ENCODE measurements at regions of chr2 and their contacts with region 1.

Region 1: GRCh38 chr2:144357623-144358373 is 162.1 kb downstream of the ZEB2 start:
- DNase-seq: peak; percentile 66
- H3K4me3 Mint-ChIP-seq: peak overlapping the region; percentile 9
- H3K27ac Mint-ChIP-seq: peak overlapping the region; percentile 68
- H3K4me1 Mint-ChIP-seq: peaks cover 16% of the 10 kb centered on the region
- H3K27me3 Mint-ChIP-seq: no peaks in the 10 kb centered on the region

Region 2: GRCh38 chr2:144341538-144341937 is 16.3 kb before region 1 on chr2:
- intact Hi-C with region 1: loop called (anchors 2 kb)
- DNase-seq: no peak
- H3K4me3 Mint-ChIP-seq: no peak overlapping the region
- H3K27ac Mint-ChIP-seq: peak overlapping the region; percentile 56
- H3K4me1 Mint-ChIP-seq: peaks cover 21% of the 10 kb centered on the region
- H3K27me3 Mint-ChIP-seq: no peaks in the 10 kb centered on the region

Region 3: DNA sequence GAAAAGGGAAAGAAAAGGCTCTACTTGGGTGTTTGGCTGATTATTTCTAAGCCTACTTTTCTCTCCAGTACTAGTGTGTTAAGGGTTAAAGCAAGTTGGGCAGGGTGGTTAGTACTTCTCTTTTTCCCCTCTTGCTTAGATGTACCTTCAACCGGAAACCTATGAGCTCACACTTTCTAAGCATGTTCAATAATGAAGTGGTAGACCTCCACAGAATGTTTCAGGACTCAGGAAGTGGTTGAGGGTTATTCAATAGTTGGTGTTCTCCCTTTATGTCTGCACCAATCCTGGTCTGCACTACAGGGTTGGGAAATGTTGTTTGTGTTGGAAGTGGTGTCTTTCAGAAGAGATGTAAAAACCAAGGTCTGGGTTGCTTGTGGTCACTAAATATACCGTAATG is 25.1 kb after region 1 on chr2:
- intact Hi-C with region 1: loop called (anchors 2 kb)
- DNase-seq: peak; percentile 74
- H3K4me3 Mint-ChIP-seq: no peak overlapping the region
- H3K27ac Mint-ChIP-seq: peak overlapping the region; percentile 78
- H3K4me1 Mint-ChIP-seq: peaks cover 21% of the 10 kb centered on the region
- H3K27me3 Mint-ChIP-seq: peaks cover 7% of the 10 kb centered on the region